A549 (cell line): ENCODE measurements at regions of chr20 and their contacts with region 1.

Region 1: GRCh38 chr20:5222919-5223634 is 93.7 kb downstream of the PROKR2 start:
- DNase-seq: peak; percentile 63 to 71
- ATAC-seq: peak; percentile 76 to 88; a peak in 4 of 6 replicates
- H3K4me3 ChIP-seq: no peak overlapping the region
- H3K27ac ChIP-seq: no peak overlapping the region
- H3K4me1 ChIP-seq: 0 out of 3 replicates have a peak, but pooled peaks cover 3% of the 10 kb centered on the region
- CTCF ChIP-seq: peak; percentile 92
- EP300 ChIP-seq: no peak
- POLR2A ChIP-seq: no peak
- RAD21 ChIP-seq: peak; percentile 61 to 83

Region 2: GRCh38 chr20:4989570-4989969 is 233.5 kb before region 1 on chr20:
- CTCF ChIA-PET with region 1: no interaction called
- POLR2A ChIA-PET with region 1: no interaction called
- DNase-seq: no peak
- ATAC-seq: no peak
- H3K4me3 ChIP-seq: no peak overlapping the region
- H3K27ac ChIP-seq: no peak overlapping the region
- H3K4me1 ChIP-seq: no peaks in the 10 kb centered on the region
- CTCF ChIP-seq: no peak
- EP300 ChIP-seq: no peak
- POLR2A ChIP-seq: no peak
- RAD21 ChIP-seq: no peak

Region 3: GRCh38 chr20:5234158-5234557 is 11.1 kb after region 1 on chr20:
- CTCF ChIA-PET with region 1: interaction called, 14 read pairs
- POLR2A ChIA-PET with region 1: no interaction called
- DNase-seq: no peak
- ATAC-seq: no peak
- H3K4me3 ChIP-seq: no peak overlapping the region
- H3K27ac ChIP-seq: no peak overlapping the region
- H3K4me1 ChIP-seq: no peaks in the 10 kb centered on the region
- CTCF ChIP-seq: no peak
- EP300 ChIP-seq: no peak
- POLR2A ChIP-seq: no peak
- RAD21 ChIP-seq: no peak

Region 4: DNA sequence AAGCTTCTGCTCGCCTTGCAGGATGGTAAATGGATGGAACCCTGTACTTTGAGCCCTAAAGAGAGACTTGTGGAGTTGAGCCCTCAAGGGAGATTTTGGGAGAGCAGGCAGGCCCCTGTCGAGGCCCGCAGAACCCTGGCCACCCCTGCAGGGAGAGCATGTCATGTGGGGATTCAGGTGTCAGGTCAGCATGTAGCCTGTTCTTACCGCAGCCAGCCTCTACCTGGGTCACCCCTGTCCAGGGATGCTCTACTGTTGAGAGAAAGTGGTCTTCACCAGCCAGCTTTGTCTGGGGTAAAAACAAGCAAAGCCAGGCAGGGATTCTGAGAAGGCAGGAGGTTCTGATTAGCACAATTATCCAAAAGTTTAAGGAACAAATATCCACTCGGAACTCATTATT is 149.3 kb after region 1 on chr20:
- CTCF ChIA-PET with region 1: no interaction called
- POLR2A ChIA-PET with region 1: no interaction called
- DNase-seq: no peak
- ATAC-seq: no peak
- H3K4me3 ChIP-seq: no peak overlapping the region
- H3K27ac ChIP-seq: no peak overlapping the region
- H3K4me1 ChIP-seq: no peaks in the 10 kb centered on the region
- CTCF ChIP-seq: no peak
- EP300 ChIP-seq: no peak
- POLR2A ChIP-seq: no peak
- RAD21 ChIP-seq: no peak

Region 5: GRCh38 chr20:5596401-5597193 is 373.5 kb after region 1 on chr20:
- CTCF ChIA-PET with region 1: no interaction called
- POLR2A ChIA-PET with region 1: no interaction called
- DNase-seq: no peak
- ATAC-seq: no peak
- H3K4me3 ChIP-seq: no peak overlapping the region
- H3K27ac ChIP-seq: no peak overlapping the region
- H3K4me1 ChIP-seq: no peaks in the 10 kb centered on the region
- CTCF ChIP-seq: no peak
- EP300 ChIP-seq: no peak
- POLR2A ChIP-seq: no peak
- RAD21 ChIP-seq: no peak